H1 (cell line): ENCODE measurements at regions of chr10 and their contacts with region 1.

Region 1: DNA sequence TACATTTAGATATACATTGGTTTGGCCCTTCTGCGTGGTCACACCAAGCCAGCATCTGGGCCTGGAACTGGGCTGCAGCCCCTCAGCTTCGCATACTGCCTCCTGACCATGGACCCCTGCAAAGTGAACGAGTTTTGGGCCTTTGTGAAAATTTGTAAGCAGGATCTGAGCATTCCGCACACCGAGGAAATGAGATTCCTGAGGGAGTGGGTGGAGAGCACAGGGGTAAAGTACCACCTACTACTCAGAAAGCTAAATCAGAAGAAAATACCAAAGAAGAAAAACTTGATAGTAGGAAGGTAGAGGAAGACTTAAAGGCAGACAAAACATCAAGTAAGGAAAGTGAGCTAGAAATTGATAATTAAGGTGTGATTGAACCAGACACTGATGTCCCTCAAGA is 22.5 kb upstream of the NT5C2 start:
- DNase-seq: no peak
- H3K4me3 ChIP-seq: no peak overlapping the region
- H3K27ac ChIP-seq: no peak overlapping the region
- H3K4me1 ChIP-seq: peaks cover 0 to 3% (median 1%) of the 10 kb centered on the region in 4 experiments; a peak in 2 of 7 replicates
- H3K27me3 ChIP-seq: no peaks in the 10 kb centered on the region
- CTCF ChIP-seq: no peak
- EP300 ChIP-seq: no peak
- POLR2A ChIP-seq: no peak
- RAD21 ChIP-seq: no peak

Region 2: GRCh38 chr10:103225939-103226338 is 10.3 kb after region 1 on chr10:
- CTCF ChIA-PET with region 1: no interaction called
- POLR2A ChIA-PET with region 1: interaction called, 15 read pairs
- DNase-seq: no peak
- H3K4me3 ChIP-seq: no peak overlapping the region
- H3K27ac ChIP-seq: no peak overlapping the region
- H3K4me1 ChIP-seq: peaks cover 0 to 5% (median 2%) of the 10 kb centered on the region in 4 experiments; a peak in 1 of 7 replicates
- H3K27me3 ChIP-seq: no peaks in the 10 kb centered on the region; a peak in 1 of 7 replicates
- CTCF ChIP-seq: no peak
- EP300 ChIP-seq: no peak
- POLR2A ChIP-seq: no peak
- RAD21 ChIP-seq: no peak

Region 3: DNA sequence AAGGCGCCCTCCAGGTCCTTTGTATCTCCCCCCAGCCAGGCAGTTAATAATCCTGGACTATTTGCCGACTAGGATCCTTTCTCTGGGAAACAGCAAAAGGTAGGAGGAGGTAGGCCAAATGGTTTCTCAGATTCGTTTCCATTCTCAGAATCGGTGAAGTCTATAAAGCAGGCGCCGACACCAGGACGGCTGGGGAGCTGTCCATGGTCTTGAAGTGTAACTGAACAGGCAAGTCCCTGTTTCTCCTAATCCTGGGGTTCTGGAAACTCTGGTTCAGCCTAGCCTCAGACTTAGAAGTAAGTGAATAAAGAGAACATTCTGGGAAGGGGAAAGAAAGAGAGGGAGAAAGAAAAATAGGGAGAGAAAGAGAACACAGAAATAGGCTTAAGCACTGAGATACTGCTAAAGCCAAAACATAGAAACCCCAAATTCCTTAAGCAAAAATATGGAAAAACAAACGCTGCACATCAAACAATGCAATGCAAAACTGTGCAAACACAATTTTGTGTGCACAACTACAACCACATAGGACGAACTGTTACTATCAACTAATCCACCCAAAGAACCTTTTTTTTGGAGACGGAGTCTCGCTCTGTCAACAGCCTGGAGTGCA is 50.2 kb after region 1 on chr10:
- CTCF ChIA-PET with region 1: no interaction called
- POLR2A ChIA-PET with region 1: no interaction called
- DNase-seq: peak in 1 of 2 experiments; percentile 83
- H3K4me3 ChIP-seq: no peak overlapping the region
- H3K27ac ChIP-seq: no peak overlapping the region
- H3K4me1 ChIP-seq: no peaks in the 10 kb centered on the region
- H3K27me3 ChIP-seq: peaks cover 0 to 1% (median 0%) of the 10 kb centered on the region in 4 experiments; a peak in 1 of 7 replicates
- CTCF ChIP-seq: no peak
- EP300 ChIP-seq: no peak
- POLR2A ChIP-seq: no peak
- RAD21 ChIP-seq: peak in 1 of 2 experiments; percentile 14; a peak in 1 of 4 replicates

Region 4: GRCh38 chr10:103367782-103368518 is 152.3 kb after region 1 on chr10 and contains the start of gene TAF5:
- CTCF ChIA-PET with region 1: no interaction called
- POLR2A ChIA-PET with region 1: no interaction called
- DNase-seq: peak; percentile 77 to 89
- H3K4me3 ChIP-seq: peak within 1 kb of the TSS; percentile 83 to 88 (median 86)
- H3K27ac ChIP-seq: no peak within 1 kb of the TSS; the same call in 1 of the 2 replicates
- H3K4me1 ChIP-seq: no peaks in the 10 kb centered on the region
- H3K27me3 ChIP-seq: no peaks in the 10 kb centered on the region
- CTCF ChIP-seq: no peak
- EP300 ChIP-seq: no peak
- POLR2A ChIP-seq: peak in 1 of 2 experiments; percentile 81; a peak in 2 of 3 replicates
- RAD21 ChIP-seq: no peak
- total RNA-seq, gene TAF5: 14.5 and 15.6 TPM in 2 replicates